Right ventricle myocardium inferior (tissue), 1 donor: ENCODE measurements at regions of chr1 and their contacts with region 1.

Region 1: DNA sequence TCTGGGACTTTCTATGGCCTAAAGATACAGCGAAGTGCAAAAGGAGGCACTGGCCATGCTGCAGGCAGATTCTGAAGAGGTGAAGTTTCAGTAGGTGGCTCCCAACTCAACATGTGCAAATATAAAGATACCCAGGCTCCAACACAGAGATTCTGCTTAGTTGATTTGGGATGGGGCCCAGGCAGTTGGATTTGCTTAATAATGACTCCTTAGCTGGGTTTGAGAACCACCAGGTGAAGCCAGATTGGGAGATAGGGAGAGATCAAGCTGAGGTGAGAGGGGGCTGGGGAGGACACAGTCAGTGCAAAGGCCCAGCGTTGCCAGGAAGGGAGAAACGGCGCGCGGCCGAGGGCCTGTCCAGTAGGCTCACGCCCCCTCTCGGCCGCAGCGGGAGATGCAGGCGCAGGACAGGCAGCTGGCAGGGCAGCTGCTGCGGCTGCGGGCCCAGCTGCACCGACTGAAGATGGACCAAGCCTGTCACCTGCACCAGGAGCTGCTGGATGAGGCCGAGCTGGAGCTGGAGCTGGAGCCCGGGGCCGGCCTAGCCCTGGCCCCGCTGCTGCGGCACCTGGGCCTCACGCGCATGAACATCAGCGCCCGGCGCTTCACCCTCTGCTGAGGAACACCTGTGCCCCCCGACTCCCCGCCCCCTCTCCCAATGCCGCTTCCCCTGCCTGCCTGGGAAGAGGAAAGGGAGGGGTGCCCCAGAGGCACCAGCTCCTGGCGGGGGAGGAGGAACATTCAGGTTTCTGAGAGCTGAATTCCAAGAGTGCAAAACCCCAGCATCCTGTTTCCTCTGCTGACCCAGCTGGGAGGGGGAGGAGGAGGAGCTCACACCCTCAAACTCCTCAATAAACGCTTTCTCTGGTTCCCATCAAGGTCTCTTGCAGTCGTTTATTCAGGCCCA is 1.2 kb downstream of the FAM167B start:
- DNase-seq: peak; percentile 95
- ATAC-seq: peak; percentile 75

Region 2: DNA sequence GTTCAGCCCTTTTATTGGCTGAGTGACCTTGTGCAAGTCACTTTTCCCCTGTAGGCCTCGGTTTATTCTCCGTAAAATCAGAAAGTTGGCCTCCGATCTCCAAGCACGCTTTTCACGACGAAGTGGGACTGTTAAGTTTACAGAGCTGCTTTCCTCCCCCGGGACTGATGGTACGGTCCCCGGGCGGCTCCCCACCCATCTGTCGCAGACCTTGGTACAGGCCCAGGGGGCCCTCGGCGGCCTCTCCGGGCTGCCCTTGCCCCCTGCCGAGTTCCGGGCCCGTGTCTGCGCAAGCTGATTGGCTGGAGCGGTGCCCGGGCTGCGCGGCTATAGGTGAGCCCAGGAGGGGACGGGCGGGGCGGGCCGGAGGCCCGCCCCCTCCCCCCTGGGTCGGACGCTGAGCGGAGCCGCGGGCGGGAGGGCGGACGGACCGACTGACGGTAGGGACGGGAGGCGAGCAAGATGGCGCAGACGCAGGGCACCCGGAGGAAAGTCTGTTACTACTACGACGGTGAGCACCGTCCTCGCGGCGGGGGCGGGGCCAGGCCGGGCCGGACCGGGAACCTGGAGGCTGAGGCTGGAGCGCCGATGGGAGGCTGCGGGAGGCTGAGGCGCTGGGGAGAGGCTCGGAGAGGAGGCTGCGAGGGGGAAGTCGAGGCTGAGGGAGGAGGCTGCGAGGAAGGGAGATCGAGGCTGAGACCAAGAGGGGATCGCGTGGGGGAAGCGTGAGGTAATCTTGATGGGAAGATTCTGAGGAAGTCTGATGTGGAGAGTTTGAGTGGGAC is 43.7 kb after region 1 on chr1 and contains the start of gene HDAC1:
- intact Hi-C with region 1: loop called (anchors 5 kb)
- DNase-seq: peak; percentile 99
- ATAC-seq: peak; percentile 99
- total RNA-seq, gene HDAC1: 40.6 TPM

Region 3: DNA sequence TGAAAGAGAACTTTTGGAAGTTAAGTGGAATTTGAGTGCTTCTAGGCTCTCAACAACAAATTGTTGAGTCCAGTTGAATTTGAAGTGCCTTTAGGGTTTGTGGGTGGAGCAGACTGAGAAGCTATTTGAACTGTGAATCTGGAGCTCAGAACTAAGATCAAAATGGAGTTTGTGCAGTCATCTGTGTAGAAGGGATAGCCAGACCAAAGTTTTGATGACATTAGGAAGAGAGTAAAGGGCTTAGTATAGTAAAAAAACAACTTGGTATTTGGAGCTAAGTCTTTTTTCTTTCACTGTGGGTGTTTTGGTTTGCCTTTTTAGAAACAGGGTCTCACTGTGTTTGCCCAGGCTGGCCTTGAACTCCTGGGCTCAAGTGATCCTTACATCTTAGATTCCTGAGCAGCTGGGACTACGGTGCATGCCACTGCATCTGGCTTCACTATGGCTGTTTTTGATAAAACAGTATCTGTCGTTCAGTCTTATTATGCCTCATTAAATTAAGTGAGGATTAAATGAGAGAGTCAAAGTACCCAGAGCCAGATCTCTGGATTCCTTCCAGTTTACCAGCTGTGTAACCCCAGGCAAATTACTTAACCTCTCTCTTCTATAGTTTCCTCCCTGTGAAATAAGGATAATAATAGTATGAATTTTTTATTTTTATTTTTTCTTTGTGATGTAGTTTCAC is 63.6 kb after region 1 on chr1:
- intact Hi-C with region 1: loop called (anchors 5 kb)
- DNase-seq: no peak
- ATAC-seq: no peak